Left lung (tissue), 14 donors: ENCODE measurements at regions of chr14 and their contacts with region 1.

Region 1: GRCh38 chr14:90235179-90235976 is 21.0 kb upstream of the PSMC1 start:
- DNase-seq: peak in 3 of 4 donors; percentile 46 to 91 (median 69)
- ATAC-seq: peak; percentile 99
- H3K4me3 ChIP-seq: no peak overlapping the region
- H3K27ac ChIP-seq: no peak overlapping the region
- H3K4me1 ChIP-seq: peaks cover 0 to 6% of the 10 kb centered on the region in 2 donors
- H3K27me3 ChIP-seq: peaks cover 0 to 32% of the 10 kb centered on the region in 2 donors
- CTCF ChIP-seq: peak; percentile 89 to 90

Region 2: DNA sequence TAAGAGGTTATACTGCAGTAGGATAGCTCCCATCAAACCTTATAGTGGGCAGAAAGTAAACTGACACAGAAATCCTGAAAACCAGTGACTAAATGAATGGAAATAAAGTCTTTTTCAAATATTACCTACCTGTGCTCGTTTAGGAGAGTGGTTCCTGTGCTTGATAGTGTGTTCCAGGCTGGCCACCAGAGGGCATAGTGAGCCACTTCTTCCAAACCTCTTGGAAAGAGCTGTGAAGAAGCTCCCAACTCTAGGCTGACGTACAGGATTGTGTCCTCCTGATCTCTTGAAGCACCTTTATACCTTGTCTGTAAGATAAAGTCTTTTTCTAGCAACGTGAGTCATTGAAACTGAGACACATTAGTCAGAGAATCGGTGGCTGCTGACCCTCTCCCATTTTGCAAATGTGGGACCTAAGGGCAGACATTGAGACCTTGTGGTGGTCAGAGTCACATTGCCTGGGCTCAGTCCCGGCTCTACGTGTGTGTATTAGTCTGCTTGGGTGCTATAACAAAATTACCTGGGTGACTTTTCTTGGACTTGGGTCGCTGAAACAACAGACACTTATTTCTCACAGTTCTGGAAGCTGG is 262.0 kb before region 1 on chr14:
- intact Hi-C with region 1: loop called in 1 of 2 experiments (anchors 10 kb)
- DNase-seq: peak in 2 of 4 donors; percentile 59 to 64
- ATAC-seq: peak; percentile 95
- H3K4me3 ChIP-seq: no peak overlapping the region
- H3K27ac ChIP-seq: no peak overlapping the region
- H3K4me1 ChIP-seq: peaks cover 0 to 15% of the 10 kb centered on the region in 2 donors
- H3K27me3 ChIP-seq: peaks cover 0 to 26% of the 10 kb centered on the region in 2 donors
- CTCF ChIP-seq: peak; percentile 78 to 86

Region 3: GRCh38 chr14:90319173-90319572 is 83.8 kb after region 1 on chr14:
- intact Hi-C with region 1: no loop called
- DNase-seq: no peak
- ATAC-seq: no peak
- H3K4me3 ChIP-seq: no peak overlapping the region
- H3K27ac ChIP-seq: no peak overlapping the region
- H3K4me1 ChIP-seq: peaks cover 0 to 5% of the 10 kb centered on the region in 2 donors
- H3K27me3 ChIP-seq: no peaks in the 10 kb centered on the region
- CTCF ChIP-seq: no peak